Activated T-helper 1 cell treated with anti-CD3 and anti-CD28 coated beads, Interleukin-12 subunit alpha, Interleukin-12 subunit beta, Interleukin-2, Interleukin-4 antibody, amounts not matched to agents 30 ng/mL and 10 ng/mL and 1 ng/mL, durations not matched to agents 14 hours and 24 hours and 36 hours (primary cell): ENCODE measurements at regions of chr12 and their contacts with region 1.

Region 1: DNA sequence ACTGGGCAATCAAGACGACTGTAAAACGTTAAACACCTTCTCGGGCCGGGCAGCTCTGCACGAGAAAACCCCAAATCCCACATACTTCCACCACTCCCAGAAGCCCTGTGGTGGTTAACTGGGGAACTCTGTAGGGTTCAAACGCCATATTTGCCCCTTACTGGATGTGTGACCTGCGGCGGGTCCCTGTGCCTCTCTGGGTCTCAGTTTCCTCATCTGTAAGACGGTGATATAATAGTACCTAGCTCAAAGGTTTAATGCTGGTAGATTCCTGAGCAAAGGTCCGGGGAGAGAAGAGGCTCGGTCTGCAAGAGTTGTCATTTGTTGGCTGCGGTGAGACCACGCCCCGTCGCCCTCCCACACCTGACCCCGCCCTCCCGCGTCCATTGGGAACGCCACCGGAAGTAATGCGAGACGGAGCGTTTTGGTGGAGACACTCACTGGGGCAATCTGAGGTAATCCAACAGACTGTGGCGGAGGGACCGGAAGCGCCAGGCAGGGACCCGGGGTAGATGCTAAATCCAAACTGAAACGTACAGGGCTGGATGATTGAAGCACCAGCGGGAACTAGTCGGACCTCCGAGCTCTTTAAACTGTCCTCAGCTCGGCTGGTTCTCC is 661 bp upstream of the OGFOD2 start:
- DNase-seq: peak; percentile 98
- H3K4me3 Mint-ChIP-seq: peak overlapping the region; percentile 98
- H3K27ac Mint-ChIP-seq: peak overlapping the region; percentile 98
- H3K4me1 Mint-ChIP-seq: peaks cover 12% of the 10 kb centered on the region
- H3K27me3 Mint-ChIP-seq: peaks cover 3% of the 10 kb centered on the region

Region 2: GRCh38 chr12:122526683-122527477 is 447.5 kb before region 1 on chr12 and contains the starts of genes KNTC1 and RSRC2:
- intact Hi-C with region 1: loop called (anchors 1 kb)
- DNase-seq: peak; percentile 99
- H3K4me3 Mint-ChIP-seq: no peak within 1 kb of the TSS
- H3K27ac Mint-ChIP-seq: no peak within 1 kb of the TSS
- H3K4me1 Mint-ChIP-seq: peaks cover 43% of the 10 kb centered on the region
- H3K27me3 Mint-ChIP-seq: no peaks in the 10 kb centered on the region
- total RNA-seq, gene KNTC1: 122 and 126 TPM in 2 replicates
- total RNA-seq, gene RSRC2: 101 and 103 TPM in 2 replicates

Region 3: DNA sequence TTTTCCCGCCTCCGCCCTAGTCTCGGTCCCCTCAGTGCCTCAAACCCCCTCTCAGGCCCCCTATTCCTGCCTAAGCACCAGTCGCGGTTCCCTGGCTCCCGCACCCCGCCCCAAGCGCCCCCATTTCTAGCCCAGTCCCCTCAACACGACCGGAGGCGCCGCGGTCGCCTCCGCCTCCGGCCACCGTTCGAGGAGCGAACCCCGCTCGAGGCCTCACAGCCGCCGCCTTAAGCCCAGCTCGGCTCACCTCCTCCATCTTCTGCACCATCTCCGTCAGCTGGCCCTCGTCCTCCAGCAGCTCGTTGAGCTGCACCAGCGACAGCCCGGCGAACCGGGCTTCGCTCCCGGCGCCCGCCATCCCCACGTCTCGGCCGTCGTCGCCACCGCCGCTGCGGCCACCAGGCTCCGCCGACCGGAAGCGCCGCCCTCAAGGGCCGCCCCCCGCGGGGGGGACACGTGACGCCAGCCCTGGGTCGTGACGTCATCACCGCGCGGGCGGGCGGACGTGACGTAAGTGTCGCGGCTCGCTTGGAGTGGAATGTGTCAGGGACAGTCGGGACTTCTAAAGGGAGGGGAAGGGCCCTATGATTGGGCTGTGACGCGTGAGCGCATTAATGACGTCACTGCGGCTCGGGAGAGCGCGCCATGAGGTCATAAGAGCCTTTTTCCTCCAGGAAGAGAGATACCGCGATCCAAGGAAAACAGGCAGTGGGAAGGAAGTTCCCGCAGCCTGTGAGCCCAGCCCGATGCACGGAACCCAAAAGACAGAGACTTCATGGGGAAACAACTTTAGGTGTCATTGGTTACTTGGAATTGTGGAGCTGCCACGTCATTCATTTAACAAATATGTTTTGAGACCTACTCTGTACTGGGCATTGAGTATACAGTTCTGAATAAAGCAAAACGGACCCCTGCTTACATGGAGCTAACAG is 78.4 kb before region 1 on chr12 and contains the start of gene VPS37B:
- intact Hi-C with region 1: loop called (anchors 2 kb)
- DNase-seq: peak; percentile 87
- H3K4me3 Mint-ChIP-seq: peak within 1 kb of the TSS; percentile 91
- H3K27ac Mint-ChIP-seq: peak within 1 kb of the TSS; percentile 91
- H3K4me1 Mint-ChIP-seq: peaks cover 93% of the 10 kb centered on the region
- H3K27me3 Mint-ChIP-seq: peaks cover 5% of the 10 kb centered on the region
- total RNA-seq, gene VPS37B: 12.7 and 14.3 TPM in 2 replicates

Region 4: DNA sequence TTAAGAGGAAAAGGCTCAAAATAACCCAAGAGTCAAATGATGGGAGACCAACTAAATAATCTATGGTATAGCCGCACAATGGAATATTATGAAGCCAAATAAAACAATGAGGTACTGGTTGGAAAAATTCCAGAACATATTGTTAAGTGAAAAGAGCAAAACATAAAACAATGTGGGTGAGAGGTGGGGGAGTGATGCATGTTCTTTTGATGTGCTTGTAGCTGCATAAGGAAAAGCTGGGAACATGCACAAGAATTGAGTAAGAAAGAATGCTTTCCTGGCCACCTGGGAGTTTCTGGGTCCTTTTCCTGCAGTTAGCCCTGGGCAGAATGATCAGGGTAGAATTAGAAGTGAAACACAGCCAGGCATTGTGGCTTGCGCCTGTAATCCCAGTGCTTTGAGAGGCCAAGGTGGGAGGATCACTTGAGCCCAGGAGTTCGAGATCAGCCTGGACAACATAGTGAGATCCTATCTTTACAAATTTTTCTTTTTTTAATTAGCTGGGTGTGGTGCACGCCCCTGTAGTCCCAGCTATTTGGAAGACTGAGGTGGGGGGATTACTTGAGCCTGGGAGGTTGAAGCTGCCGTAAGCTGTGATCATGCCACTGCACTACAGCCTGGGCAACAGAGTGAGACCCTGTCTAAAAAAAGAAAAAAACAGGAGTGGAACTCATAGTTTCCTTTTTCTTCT is 16.0 kb before region 1 on chr12:
- intact Hi-C with region 1: no loop called
- DNase-seq: no peak
- H3K4me3 Mint-ChIP-seq: no peak overlapping the region
- H3K27ac Mint-ChIP-seq: no peak overlapping the region
- H3K4me1 Mint-ChIP-seq: no peaks in the 10 kb centered on the region
- H3K27me3 Mint-ChIP-seq: no peaks in the 10 kb centered on the region

Region 5: GRCh38 chr12:123006977-123007376 is 32.6 kb after region 1 on chr12:
- intact Hi-C with region 1: no loop called
- DNase-seq: no peak
- H3K4me3 Mint-ChIP-seq: no peak overlapping the region
- H3K27ac Mint-ChIP-seq: no peak overlapping the region
- H3K4me1 Mint-ChIP-seq: no peaks in the 10 kb centered on the region
- H3K27me3 Mint-ChIP-seq: no peaks in the 10 kb centered on the region

Region 6: GRCh38 chr12:123043536-123044001 is 69.2 kb after region 1 on chr12:
- intact Hi-C with region 1: loop called (anchors 2 kb)
- DNase-seq: peak; percentile 60
- H3K4me3 Mint-ChIP-seq: no peak overlapping the region
- H3K27ac Mint-ChIP-seq: peak overlapping the region; percentile 71
- H3K4me1 Mint-ChIP-seq: peaks cover 22% of the 10 kb centered on the region
- H3K27me3 Mint-ChIP-seq: no peaks in the 10 kb centered on the region

Region 7: GRCh38 chr12:123150744-123151456 is 176.5 kb after region 1 on chr12 and contains the start of gene PITPNM2:
- intact Hi-C with region 1: loop called (anchors 2 kb)
- DNase-seq: peak; percentile 56
- H3K4me3 Mint-ChIP-seq: peak within 1 kb of the TSS; percentile 89
- H3K27ac Mint-ChIP-seq: peak within 1 kb of the TSS; percentile 90
- H3K4me1 Mint-ChIP-seq: peaks cover 41% of the 10 kb centered on the region
- H3K27me3 Mint-ChIP-seq: peaks cover 16% of the 10 kb centered on the region
- total RNA-seq, gene PITPNM2: 22.3 and 25.5 TPM in 2 replicates